Right ventricle myocardium inferior (tissue), 1 donor: ENCODE measurements at regions of chr14 and their contacts with region 1.

Region 1: DNA sequence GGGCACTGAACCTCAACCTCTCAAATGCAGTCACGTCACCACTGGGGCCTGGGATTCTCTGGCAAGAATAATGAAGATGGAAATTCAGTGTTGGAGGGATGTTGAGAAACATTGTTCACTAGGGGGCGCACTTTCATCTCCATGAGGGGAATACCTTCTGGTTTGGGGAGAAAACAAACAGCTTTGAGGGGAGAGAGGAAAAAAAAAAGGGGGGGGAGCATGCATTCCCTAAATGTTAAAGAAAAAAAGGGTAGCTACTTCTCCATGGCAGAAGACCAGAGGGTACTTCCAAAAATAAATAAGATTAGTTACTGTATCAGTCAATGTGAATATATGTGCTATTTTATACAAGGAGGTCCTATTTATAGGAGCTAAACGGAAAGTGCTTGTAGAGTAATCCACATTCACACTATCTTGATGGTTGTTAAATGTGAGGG is 5.8 kb upstream of the TBPL2 start:
- DNase-seq: no peak
- ATAC-seq: peak; percentile 73

Region 2: DNA sequence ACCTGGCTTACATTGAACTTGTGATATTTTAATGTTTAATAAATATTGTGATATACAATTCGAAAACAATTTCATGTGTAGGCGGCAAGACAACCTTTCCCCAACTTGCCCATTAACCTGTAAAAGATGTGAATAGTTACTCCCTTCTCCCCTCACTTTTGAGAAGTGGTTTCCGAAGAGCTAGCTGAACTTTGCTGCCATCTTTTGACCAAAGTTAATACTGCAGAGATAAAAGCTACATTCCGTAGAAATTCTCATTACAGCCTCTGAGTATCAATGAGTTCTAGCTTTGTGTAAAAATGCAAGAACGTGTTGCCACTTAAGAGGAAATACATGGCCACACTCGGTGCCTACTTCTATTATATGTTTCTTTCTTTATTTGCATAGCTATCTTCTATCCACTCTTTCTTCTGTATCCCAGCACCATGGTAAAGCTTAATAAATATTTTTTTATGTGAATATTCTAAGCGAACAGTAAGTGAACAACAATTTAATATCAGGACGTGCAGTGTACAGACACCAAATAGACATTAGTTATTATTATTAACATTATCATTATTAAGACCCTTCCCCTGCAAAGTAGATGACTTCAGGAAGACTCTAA is 1028.3 kb after region 1 on chr14:
- intact Hi-C with region 1: loop called (anchors 5 kb)
- DNase-seq: no peak
- ATAC-seq: no peak